A549 (cell line): ENCODE measurements at regions of chr1 and their contacts with region 1.

Region 1: GRCh38 chr1:200558866-200559459 is 61.6 kb downstream of the KIF14 start:
- DNase-seq: peak; percentile 44 to 64
- ATAC-seq: peak; percentile 85 to 89
- H3K4me3 ChIP-seq: no peak overlapping the region
- H3K27ac ChIP-seq: no peak overlapping the region
- H3K4me1 ChIP-seq: no peaks in the 10 kb centered on the region
- CTCF ChIP-seq: peak; percentile 85
- EP300 ChIP-seq: no peak
- POLR2A ChIP-seq: no peak
- RAD21 ChIP-seq: peak; percentile 67 to 68

Region 2: DNA sequence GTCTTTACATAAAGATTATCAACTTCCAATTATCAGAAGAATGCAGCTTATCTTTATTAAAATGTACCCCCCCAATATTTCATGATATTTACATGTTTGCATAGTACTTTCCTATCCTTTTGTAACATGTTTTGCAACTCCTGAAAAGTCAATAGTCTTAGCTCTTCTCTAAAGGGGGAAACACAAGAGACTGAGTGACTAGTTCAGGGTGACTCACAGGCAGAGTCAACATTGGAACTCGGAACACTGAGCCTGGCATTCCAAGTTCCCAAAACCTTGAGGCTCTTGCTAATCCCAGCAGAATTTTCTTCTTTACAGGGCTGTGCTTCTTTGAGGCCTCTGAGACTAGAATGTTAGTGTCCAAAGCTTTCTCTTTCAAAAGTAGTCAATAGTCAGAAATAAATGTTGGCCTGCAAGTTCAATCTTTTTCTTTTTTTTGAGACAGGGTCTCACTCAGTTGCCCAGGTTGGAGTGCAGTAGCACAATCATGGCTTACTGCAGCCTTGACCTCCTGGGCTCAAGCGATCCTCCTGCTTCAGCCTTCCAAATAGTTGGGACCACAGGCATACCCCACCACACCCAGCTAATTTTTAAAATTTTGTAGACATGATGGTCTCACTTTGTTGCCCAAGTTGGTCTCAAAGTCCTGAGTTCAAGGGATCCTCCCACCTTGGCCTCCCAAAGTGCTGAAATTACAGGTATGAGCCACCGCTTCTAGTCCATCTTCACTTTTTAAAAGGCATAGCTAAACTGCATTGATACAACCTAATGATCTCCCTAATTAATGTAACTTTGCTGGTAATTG is 186.7 kb before region 1 on chr1:
- CTCF ChIA-PET with region 1: no interaction called
- POLR2A ChIA-PET with region 1: no interaction called
- DNase-seq: peak; percentile 85 to 95
- ATAC-seq: peak; percentile 95
- H3K4me3 ChIP-seq: peak overlapping the region; percentile 31; the same call in 1 of the 3 replicates
- H3K27ac ChIP-seq: peak overlapping the region; percentile 88 to 95
- H3K4me1 ChIP-seq: peaks cover 94% of the 10 kb centered on the region
- CTCF ChIP-seq: no peak
- EP300 ChIP-seq: peak; percentile 96 to 98
- POLR2A ChIP-seq: no peak
- RAD21 ChIP-seq: peak; percentile 48 to 72

Region 3: GRCh38 chr1:200428482-200429205 is 130.3 kb before region 1 on chr1:
- CTCF ChIA-PET with region 1: no interaction called
- POLR2A ChIA-PET with region 1: no interaction called
- DNase-seq: no peak
- ATAC-seq: peak in 1 of 2 experiments; percentile 62; a peak in 3 of 6 replicates
- H3K4me3 ChIP-seq: no peak overlapping the region
- H3K27ac ChIP-seq: peak overlapping the region; percentile 50 to 74; a peak in 5 of 6 replicates
- H3K4me1 ChIP-seq: peaks cover 26% of the 10 kb centered on the region
- CTCF ChIP-seq: no peak
- EP300 ChIP-seq: no peak
- POLR2A ChIP-seq: no peak
- RAD21 ChIP-seq: no peak

Region 4: GRCh38 chr1:200530623-200531261 is 28.2 kb before region 1 on chr1:
- CTCF ChIA-PET with region 1: interaction called, 10 read pairs
- POLR2A ChIA-PET with region 1: no interaction called
- DNase-seq: no peak
- ATAC-seq: peak in 1 of 2 experiments; percentile 26; a peak in 1 of 6 replicates
- H3K4me3 ChIP-seq: no peak overlapping the region
- H3K27ac ChIP-seq: no peak overlapping the region
- H3K4me1 ChIP-seq: no peaks in the 10 kb centered on the region
- CTCF ChIP-seq: no peak
- EP300 ChIP-seq: no peak
- POLR2A ChIP-seq: no peak
- RAD21 ChIP-seq: no peak

Region 5: DNA sequence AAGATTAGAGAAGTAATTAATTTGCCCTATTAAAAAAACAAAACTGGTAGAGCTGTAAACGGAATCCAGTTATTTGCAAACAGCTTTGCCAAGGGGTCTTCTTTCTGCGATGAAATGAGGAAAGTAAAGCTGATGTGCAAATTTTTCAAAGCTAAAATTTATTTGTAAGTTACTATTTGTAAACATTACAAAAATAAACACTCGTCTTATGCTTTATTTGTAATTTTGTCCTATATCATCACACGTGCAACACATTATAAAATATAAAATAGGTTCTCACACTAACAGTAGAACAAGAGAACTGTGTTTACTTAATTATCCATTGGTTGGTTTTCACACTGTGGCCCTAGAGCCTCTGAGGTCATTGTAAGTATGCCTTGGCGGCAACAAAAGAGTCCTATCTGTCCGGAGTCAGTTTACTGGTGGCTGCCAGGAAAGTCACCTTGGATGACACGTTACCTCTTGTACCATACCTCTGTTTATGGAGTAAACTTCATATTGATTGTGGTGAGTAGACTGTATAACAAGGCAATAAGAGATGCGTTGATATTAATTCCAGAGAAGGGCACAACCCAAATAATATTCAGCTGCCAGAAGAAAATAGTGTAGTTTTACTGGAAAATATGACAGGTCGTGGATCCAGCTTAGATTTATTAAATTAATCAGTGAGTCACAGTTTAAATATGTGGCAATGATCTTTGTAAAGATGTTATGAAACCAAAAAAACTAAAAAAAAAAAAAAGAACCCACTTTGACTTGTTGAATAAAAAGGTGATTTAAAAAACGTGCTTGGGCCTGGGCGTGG is 81.9 kb after region 1 on chr1:
- CTCF ChIA-PET with region 1: no interaction called
- POLR2A ChIA-PET with region 1: no interaction called
- DNase-seq: no peak
- ATAC-seq: no peak
- H3K4me3 ChIP-seq: no peak overlapping the region
- H3K27ac ChIP-seq: peak overlapping the region; percentile 89 to 90
- H3K4me1 ChIP-seq: peaks cover 18% of the 10 kb centered on the region
- CTCF ChIP-seq: no peak
- EP300 ChIP-seq: no peak; a peak in 1 of 5 replicates
- POLR2A ChIP-seq: no peak
- RAD21 ChIP-seq: no peak

Region 6: GRCh38 chr1:201042779-201043461 is 484.0 kb after region 1 on chr1:
- CTCF ChIA-PET with region 1: interaction called, 12 read pairs
- POLR2A ChIA-PET with region 1: no interaction called
- DNase-seq: peak; percentile 67 to 78
- ATAC-seq: peak; percentile 85 to 94
- H3K4me3 ChIP-seq: no peak overlapping the region
- H3K27ac ChIP-seq: peak overlapping the region in 1 of 2 experiments; percentile 27; a peak in 3 of 6 replicates
- H3K4me1 ChIP-seq: 0 out of 3 replicates have a peak, but pooled peaks cover 3% of the 10 kb centered on the region
- CTCF ChIP-seq: peak; percentile 91
- EP300 ChIP-seq: no peak
- POLR2A ChIP-seq: no peak
- RAD21 ChIP-seq: peak; percentile 94 to 96